Esophagus squamous epithelium (tissue), 5 donors: ENCODE measurements at regions of chr19 and their contacts with region 1.

Region 1: GRCh38 chr19:47790398-47790814 is 11.9 kb downstream of the SELENOW start:
- DNase-seq: no peak
- H3K4me3 ChIP-seq: no peak overlapping the region
- H3K27ac ChIP-seq: no peak overlapping the region
- H3K4me1 ChIP-seq: peaks cover 0 to 31% (median 6%) of the 10 kb centered on the region in 3 donors
- H3K27me3 ChIP-seq: no peaks in the 10 kb centered on the region
- CTCF ChIP-seq: peak; percentile 62 to 88 (median 72)
- POLR2A ChIP-seq: no peak

Region 2: DNA sequence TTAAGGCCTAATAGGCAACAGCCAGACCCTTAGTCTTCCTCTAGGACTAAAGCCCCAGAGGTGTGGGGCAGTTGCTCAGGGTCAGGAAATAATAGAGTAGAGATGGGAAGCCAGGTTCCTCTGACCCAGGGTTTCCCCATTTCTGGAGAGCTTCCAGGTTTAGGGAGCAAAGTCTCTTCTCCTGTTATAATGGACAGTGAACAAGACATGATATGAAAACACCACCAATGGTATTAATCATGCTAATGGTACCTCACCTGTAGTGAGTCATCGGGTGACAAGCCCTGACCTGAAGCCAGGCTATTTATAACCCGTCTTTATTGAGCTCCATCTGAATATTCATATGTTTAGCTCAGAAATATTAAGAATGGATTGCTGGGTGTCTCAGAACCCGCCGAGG is 156.9 kb before region 1 on chr19:
- intact Hi-C with region 1: no loop called
- DNase-seq: no peak
- H3K4me3 ChIP-seq: no peak overlapping the region
- H3K27ac ChIP-seq: peak overlapping the region in 3 of 4 donors; percentile 32 to 63 (median 49)
- H3K4me1 ChIP-seq: peaks cover 8 to 53% (median 20%) of the 10 kb centered on the region in 3 donors
- H3K27me3 ChIP-seq: no peaks in the 10 kb centered on the region
- CTCF ChIP-seq: no peak
- POLR2A ChIP-seq: no peak

Region 3: GRCh38 chr19:47713046-47714021 is 77.1 kb before region 1 on chr19 and contains the start of gene EHD2:
- intact Hi-C with region 1: loop called (anchors 5 kb)
- DNase-seq: no peak
- H3K4me3 ChIP-seq: peak within 1 kb of the TSS; percentile 60 to 83 (median 78)
- H3K27ac ChIP-seq: peak within 1 kb of the TSS; percentile 88 to 96 (median 91)
- H3K4me1 ChIP-seq: peaks cover under 1 to 57% (median 37%) of the 10 kb centered on the region in 3 donors
- H3K27me3 ChIP-seq: no peaks in the 10 kb centered on the region
- CTCF ChIP-seq: peak; percentile 86 to 98 (median 95)
- POLR2A ChIP-seq: peak in 2 of 4 donors; percentile 81 to 83
- total RNA-seq, gene EHD2: 34.8 to 50.7 (median 39.2) TPM

Region 4: DNA sequence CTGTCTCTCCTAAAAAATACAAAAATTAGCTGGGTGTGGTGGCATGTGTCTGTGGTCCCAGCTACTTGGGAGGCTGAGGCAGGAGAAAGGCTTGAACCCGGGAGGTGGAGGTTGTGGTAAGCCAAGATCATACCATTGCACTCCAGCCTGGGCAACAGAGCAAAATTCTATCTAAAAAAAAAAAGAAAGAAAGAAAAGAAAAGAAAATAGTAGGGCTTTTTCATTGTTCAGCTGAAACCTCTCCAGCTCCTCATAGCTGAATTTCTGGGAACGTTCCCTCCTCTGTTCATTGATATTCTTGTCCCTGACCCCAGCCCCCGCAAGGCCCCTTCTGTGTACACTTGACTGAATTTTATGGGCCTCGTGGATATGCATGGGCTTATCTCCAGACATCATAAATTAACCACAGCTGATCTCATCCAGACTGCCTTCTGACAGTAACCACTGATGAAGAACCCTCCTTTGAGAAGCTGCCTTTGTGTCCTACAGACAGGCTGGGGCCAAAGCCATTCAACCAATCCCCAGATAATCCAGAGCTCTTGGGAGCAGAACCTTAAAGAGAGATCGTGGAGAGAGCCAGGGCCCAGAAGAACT is 203.9 kb after region 1 on chr19 and contains the start of gene ELSPBP1:
- intact Hi-C with region 1: no loop called
- DNase-seq: no peak
- H3K4me3 ChIP-seq: no peak within 1 kb of the TSS
- H3K27ac ChIP-seq: no peak within 1 kb of the TSS
- H3K4me1 ChIP-seq: no peaks in the 10 kb centered on the region
- H3K27me3 ChIP-seq: peaks cover 0 to 41% (median 0%) of the 10 kb centered on the region in 4 donors
- CTCF ChIP-seq: no peak
- POLR2A ChIP-seq: no peak
- total RNA-seq, gene ELSPBP1: not detected